Calu3 (cell line): ENCODE measurements at regions of chr4 and their contacts with region 1.

Region 1: DNA sequence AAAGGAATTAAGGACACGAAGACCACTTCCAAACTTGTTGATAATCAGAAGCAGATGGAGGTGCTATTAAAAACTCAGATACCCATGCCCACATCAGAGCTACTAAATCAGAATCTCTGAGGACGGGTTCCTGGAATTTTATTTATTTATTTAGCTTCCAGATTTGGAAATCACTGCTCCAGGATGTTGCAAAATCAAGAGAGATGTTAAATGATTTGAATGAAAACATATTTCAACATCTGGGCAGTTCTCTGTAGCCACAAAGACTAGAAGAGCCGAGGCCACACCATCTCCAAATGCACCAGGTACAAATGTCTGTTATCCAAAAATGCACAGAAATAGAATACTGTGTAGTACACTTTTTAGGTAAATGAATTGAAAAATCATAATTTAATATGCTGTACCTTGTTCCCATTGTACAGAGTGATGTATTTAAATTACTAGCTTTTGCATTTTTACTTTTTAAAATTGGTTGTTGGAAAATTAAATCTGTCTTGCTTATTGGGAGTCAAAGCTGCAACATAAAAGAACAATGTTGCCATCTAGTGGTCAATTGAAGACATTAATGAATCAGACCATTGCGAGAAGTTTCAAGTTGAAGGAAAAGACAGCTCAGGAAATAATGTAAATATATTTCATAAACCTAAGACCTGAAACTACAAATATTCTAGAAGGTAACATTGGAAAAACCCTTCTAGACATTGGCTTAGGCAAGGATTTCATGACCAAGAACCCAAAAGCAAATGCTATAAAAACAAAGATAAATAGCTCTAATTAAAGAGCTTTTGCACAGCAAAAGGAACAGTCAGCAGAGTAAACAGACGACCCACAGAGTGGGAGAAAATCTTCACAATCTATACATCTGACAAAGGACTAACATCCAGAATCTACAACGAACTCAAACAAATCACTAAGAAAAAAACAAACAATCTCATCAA is 151.3 kb upstream of the TTC29 start:
- DNase-seq: no peak
- H3K4me3 Mint-ChIP-seq: no peak overlapping the region
- H3K27ac Mint-ChIP-seq: no peak overlapping the region
- H3K4me1 Mint-ChIP-seq: no peaks in the 10 kb centered on the region
- H3K27me3 Mint-ChIP-seq: no peaks in the 10 kb centered on the region
- CTCF ChIP-seq: peak; percentile 14

Region 2: DNA sequence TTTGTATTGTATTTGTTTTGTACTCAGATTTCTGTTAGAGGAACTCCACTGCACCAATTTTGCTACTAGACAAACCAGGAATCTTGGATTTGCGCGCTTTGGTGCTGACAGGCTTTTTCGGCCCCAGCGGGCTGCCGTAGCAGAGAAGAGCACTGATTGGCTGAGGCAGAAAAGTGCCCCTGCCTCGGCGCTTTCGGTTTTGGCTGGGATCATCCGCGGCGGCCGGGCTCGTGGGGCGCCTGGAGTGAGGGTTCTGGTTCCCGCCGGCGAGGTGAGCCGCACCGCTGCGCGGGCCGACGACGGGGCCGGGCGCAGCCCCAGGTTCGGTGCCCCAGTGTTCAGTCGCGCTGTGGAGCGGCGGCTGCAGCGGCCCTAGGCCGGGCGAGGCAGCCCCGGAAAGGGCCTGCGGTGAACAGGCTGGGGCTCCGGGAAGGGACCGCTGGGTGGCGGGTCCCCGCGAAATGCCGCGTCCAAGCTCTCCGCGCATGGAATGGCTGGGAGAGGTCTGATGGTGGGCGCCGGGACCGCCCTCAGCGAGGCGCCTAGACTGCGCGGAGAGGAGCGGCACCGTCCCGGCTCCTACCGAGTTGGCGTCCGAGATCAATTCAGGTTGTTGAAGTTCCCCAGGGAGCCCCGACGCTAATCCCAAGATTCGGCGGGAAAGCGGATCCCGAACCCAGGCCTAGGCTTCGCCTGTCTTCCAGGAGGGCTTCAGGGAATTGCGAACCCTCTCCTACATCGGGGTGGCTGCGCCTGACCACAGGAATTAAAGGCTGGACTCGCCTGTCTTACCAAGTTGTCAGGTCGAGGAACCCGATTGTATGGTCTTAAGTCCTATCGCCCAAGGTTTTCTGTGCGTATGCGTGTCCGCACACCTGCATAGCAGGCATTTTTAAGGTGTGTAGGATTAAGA is 921.1 kb before region 1 on chr4 and contains the start of gene LSM6:
- CTCF ChIA-PET with region 1: no interaction called
- intact Hi-C with region 1: loop called (anchors 5 kb)
- DNase-seq: peak; percentile 77
- H3K4me3 Mint-ChIP-seq: peak within 1 kb of the TSS; percentile 68
- H3K27ac Mint-ChIP-seq: peak within 1 kb of the TSS; percentile 69
- H3K4me1 Mint-ChIP-seq: peaks cover 8% of the 10 kb centered on the region
- H3K27me3 Mint-ChIP-seq: no peaks in the 10 kb centered on the region
- CTCF ChIP-seq: no peak
- total RNA-seq, gene LSM6: 30.7 and 37.1 TPM in 2 replicates

Region 3: DNA sequence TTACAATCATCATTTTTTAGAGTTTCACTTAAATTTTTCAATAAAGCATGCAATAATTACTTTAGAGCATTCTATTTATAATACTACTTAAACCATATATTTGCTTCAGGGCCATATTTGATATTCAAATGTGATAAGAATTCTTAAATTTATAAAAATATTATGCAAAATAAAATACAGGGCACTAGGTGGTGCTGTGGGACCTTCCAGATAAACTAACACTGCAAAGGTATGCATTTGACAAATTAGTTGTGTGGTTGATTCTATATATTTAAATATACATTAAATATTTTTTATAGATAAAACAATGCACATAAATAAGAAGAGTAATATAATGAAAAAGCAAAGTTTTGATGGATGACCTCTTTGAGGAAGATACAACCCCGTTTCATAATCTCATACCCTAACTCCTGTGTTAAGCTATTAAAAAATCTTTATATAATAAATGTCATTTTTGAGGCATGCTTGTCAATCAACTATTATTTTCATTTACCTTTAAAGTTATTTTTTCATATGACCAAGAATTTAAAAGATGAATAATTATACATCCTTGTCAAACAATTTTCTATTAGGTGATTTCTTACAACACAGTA is 754.2 kb before region 1 on chr4:
- CTCF ChIA-PET with region 1: no interaction called
- intact Hi-C with region 1: loop called (anchors 2 kb)
- DNase-seq: peak; percentile 19
- H3K4me3 Mint-ChIP-seq: no peak overlapping the region
- H3K27ac Mint-ChIP-seq: no peak overlapping the region
- H3K4me1 Mint-ChIP-seq: no peaks in the 10 kb centered on the region
- H3K27me3 Mint-ChIP-seq: no peaks in the 10 kb centered on the region
- CTCF ChIP-seq: no peak

Region 4: DNA sequence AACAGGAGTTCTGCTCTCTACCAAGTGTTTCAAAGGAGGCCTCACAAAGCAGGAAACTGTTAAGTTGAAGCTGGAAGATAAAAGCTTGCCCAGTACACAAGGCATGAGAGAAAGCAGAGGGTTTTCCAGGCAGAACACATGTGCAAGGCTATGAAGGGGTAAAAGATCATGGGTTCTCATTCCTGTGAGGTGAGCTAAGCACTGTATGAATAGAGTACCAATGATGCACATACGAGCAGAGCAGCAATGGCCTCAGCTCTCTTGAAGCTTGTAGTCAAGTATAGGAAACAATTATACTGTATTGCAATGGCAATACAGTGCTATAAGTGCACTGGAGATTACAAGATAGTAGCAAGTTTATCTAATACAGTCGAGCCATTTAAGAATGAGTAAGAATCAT is 169.2 kb before region 1 on chr4:
- CTCF ChIA-PET with region 1: no interaction called
- intact Hi-C with region 1: loop called (anchors 10 kb)
- DNase-seq: no peak
- H3K4me3 Mint-ChIP-seq: no peak overlapping the region
- H3K27ac Mint-ChIP-seq: no peak overlapping the region
- H3K4me1 Mint-ChIP-seq: peaks cover 10% of the 10 kb centered on the region
- H3K27me3 Mint-ChIP-seq: no peaks in the 10 kb centered on the region
- CTCF ChIP-seq: no peak

Region 5: GRCh38 chr4:147019061-147019460 is 77.9 kb before region 1 on chr4:
- CTCF ChIA-PET with region 1: interaction called, 38 read pairs
- intact Hi-C with region 1: loop called (anchors 1 kb)
- DNase-seq: peak; percentile 65
- H3K4me3 Mint-ChIP-seq: no peak overlapping the region
- H3K27ac Mint-ChIP-seq: no peak overlapping the region
- H3K4me1 Mint-ChIP-seq: no peaks in the 10 kb centered on the region
- H3K27me3 Mint-ChIP-seq: no peaks in the 10 kb centered on the region
- CTCF ChIP-seq: peak; percentile 27